MCF 10A (cell line): ENCODE measurements at regions of chr16 and their contacts with region 1.

Region 1: GRCh38 chr16:77782694-77783093 is 5.7 kb upstream of the VAT1L start:
- DNase-seq: peak; percentile 41
- H3K4me3 Mint-ChIP-seq: no peak overlapping the region
- H3K27ac Mint-ChIP-seq: no peak overlapping the region
- H3K4me1 Mint-ChIP-seq: peaks cover 13% of the 10 kb centered on the region
- H3K27me3 Mint-ChIP-seq: peaks cover 19% of the 10 kb centered on the region
- CTCF ChIP-seq: peak; percentile 26

Region 2: GRCh38 chr16:77406677-77407076 is 376.0 kb before region 1 on chr16:
- CTCF ChIA-PET with region 1: no interaction called
- POLR2A ChIA-PET with region 1: no interaction called
- intact Hi-C with region 1: no loop called
- DNase-seq: peak; percentile 10
- H3K4me3 Mint-ChIP-seq: no peak overlapping the region
- H3K27ac Mint-ChIP-seq: no peak overlapping the region
- H3K4me1 Mint-ChIP-seq: no peaks in the 10 kb centered on the region
- H3K27me3 Mint-ChIP-seq: no peaks in the 10 kb centered on the region
- CTCF ChIP-seq: no peak

Region 3: DNA sequence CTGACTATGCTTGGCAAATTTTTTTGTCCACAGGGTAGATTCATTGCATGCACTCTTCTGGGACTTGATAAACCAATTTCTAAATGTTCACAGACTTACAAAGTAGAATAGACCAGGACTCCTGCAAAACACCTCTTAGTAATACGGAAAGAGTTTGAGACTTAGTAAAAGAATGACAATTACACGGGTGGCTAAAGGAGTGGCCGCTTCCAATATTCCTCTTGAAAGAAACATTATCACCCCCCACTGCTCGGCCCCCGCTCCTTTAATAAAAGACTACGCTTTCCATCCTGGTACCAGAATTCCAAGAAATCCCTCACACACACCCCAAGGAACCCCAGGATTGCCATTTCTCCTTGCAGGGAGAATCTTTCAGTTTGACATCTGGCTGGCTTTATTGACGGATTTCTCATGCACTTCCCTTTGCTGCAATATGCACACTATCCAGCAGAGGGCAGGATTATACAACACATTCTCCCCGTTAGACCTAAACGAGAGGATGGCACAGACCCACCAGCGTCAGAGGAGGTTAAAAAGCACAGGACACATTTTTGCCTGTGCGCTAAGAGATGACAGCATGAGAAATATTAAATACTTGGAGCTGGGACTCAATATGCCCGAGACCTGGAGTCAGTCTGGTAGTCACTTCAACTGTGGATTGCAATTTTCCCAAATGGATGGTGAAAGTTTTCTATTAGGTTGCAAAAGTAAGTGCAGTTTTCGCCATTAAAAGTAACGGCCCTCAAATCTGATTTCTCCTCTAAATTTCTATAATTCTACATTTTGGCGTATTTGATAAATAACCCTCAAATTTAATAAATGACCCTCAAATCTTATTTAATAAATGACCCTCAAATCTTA is 107.0 kb before region 1 on chr16:
- CTCF ChIA-PET with region 1: no interaction called
- POLR2A ChIA-PET with region 1: no interaction called
- intact Hi-C with region 1: loop called (anchors 1 kb)
- DNase-seq: peak; percentile 78
- H3K4me3 Mint-ChIP-seq: no peak overlapping the region
- H3K27ac Mint-ChIP-seq: no peak overlapping the region
- H3K4me1 Mint-ChIP-seq: no peaks in the 10 kb centered on the region
- H3K27me3 Mint-ChIP-seq: peaks cover 7% of the 10 kb centered on the region
- CTCF ChIP-seq: peak; percentile 80

Region 4: GRCh38 chr16:77700846-77701245 is 81.8 kb before region 1 on chr16:
- CTCF ChIA-PET with region 1: no interaction called
- POLR2A ChIA-PET with region 1: no interaction called
- intact Hi-C with region 1: no loop called
- DNase-seq: no peak
- H3K4me3 Mint-ChIP-seq: no peak overlapping the region
- H3K27ac Mint-ChIP-seq: no peak overlapping the region
- H3K4me1 Mint-ChIP-seq: no peaks in the 10 kb centered on the region
- H3K27me3 Mint-ChIP-seq: peaks cover 32% of the 10 kb centered on the region
- CTCF ChIP-seq: no peak

Region 5: GRCh38 chr16:77722309-77723107 is 60.2 kb before region 1 on chr16 and contains the start of gene NUDT7:
- CTCF ChIA-PET with region 1: interaction called, 4 read pairs
- POLR2A ChIA-PET with region 1: no interaction called
- intact Hi-C with region 1: loop called (anchors 2 kb)
- DNase-seq: peak; percentile 96
- H3K4me3 Mint-ChIP-seq: peak within 1 kb of the TSS; percentile 76
- H3K27ac Mint-ChIP-seq: peak within 1 kb of the TSS; percentile 80
- H3K4me1 Mint-ChIP-seq: peaks cover 6% of the 10 kb centered on the region
- H3K27me3 Mint-ChIP-seq: no peaks in the 10 kb centered on the region
- CTCF ChIP-seq: no peak
- total RNA-seq, gene NUDT7: 5.1 and 6.7 TPM in 2 replicates